ENCODE measurements at regions of chr19 and their contacts with region 1.

Region 1: DNA sequence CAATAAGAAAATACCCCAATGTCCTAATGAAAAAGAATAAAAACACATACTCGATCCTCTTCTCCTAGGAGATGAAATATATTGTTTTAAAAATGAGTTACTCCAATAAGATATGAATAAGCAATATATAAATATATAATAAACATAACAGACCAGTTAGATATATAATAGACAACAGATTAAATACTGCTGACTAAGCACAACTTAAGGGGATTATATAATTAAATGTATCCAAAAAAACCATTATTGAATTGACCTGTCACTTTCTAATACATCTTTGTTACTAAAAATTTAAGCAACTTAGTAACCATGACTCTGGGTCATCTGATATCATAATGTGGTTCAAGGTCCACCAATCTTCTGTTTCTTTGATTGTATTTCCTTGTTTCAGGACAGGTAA is 14.0 kb upstream of the ZNF780B start:
- DNase-seq: no peak
- H3K4me3 ChIP-seq: no peak overlapping the region
- H3K27ac ChIP-seq: no peak overlapping the region
- H3K4me1 ChIP-seq: no peaks in the 10 kb centered on the region
- H3K27me3 ChIP-seq: no peaks in the 10 kb centered on the region
- CTCF ChIP-seq: no peak

Region 2: GRCh38 chr19:39953915-39954314 is 116.1 kb before region 1 on chr19:
- CTCF ChIA-PET with region 1: interaction called, 12 read pairs
- POLR2A ChIA-PET with region 1: no interaction called
- intact Hi-C with region 1: no loop called
- DNase-seq: no peak
- H3K4me3 ChIP-seq: no peak overlapping the region
- H3K27ac ChIP-seq: no peak overlapping the region
- H3K4me1 ChIP-seq: no peaks in the 10 kb centered on the region
- H3K27me3 ChIP-seq: no peaks in the 10 kb centered on the region
- CTCF ChIP-seq: no peak